Gastrocnemius medialis (tissue), 4 donors: ENCODE measurements at regions of chr5 and their contacts with region 1.

Region 1: DNA sequence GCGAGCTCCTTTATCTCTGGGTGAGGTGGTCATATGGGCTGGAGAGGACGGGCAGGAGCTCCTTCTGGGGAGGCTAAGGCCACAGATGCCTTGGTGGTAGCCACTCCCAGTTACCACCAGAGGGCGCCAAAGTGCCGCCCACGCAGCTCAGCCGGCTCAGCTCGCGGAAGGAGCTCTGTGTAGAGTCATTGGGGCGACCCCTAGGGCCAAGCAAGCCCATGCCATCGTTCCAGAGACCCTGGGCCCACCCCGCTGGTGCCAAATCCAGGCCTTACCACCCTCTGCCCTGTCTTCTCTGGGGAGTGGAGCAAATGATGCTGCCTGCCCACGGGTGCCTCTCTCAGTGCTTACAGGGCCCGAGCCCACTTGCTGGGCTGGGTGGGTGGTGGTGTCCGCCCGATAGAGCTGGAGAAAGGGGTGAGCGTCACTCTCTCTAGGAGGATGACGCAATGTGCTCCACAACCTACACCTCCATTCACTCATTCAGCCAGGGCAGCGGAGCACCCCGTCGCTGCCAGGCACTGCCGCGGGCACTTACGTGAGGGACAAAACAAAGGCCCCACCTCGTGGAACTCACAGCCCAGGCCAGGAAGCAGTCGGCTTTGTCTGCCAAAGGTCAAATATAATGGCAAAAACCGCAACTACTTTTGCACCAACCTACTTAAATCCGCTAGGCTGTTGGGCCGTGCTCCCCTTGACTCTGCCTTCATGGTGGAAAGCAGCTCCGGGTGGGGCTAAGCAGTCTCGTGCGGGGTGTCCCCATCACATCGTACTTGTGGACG is 13.8 kb downstream of the TSPAN17 start:
- DNase-seq: peak in 1 of 2 donors; percentile 40
- ATAC-seq: peak; percentile 59 to 82
- H3K4me3 ChIP-seq: no peak overlapping the region
- H3K27ac ChIP-seq: no peak overlapping the region
- H3K4me1 ChIP-seq: peaks cover 0 to 4% of the 10 kb centered on the region in 2 donors
- H3K27me3 ChIP-seq: peaks cover 15 to 21% (median 18%) of the 10 kb centered on the region in 3 donors
- CTCF ChIP-seq: peak; percentile 79 to 98 (median 91)
- POLR2A ChIP-seq: no peak

Region 2: GRCh38 chr5:176573564-176574296 is 87.3 kb before region 1 on chr5:
- in situ Hi-C with region 1: no loop called
- intact Hi-C with region 1: loop called (anchors 5 kb)
- DNase-seq: peak; percentile 36 to 43
- ATAC-seq: peak; percentile 84 to 93
- H3K4me3 ChIP-seq: no peak overlapping the region
- H3K27ac ChIP-seq: no peak overlapping the region
- H3K4me1 ChIP-seq: no peaks in the 10 kb centered on the region
- H3K27me3 ChIP-seq: peaks cover 2 to 3% (median 2%) of the 10 kb centered on the region in 3 donors
- CTCF ChIP-seq: peak; percentile 67 to 88 (median 84)
- POLR2A ChIP-seq: no peak

Region 3: GRCh38 chr5:176959051-176959450 is 298.0 kb after region 1 on chr5:
- in situ Hi-C with region 1: loop called in 2 of 4 experiments (anchors 25 kb)
- intact Hi-C with region 1: loop called (anchors 5 kb)
- DNase-seq: no peak
- ATAC-seq: no peak
- H3K4me3 ChIP-seq: no peak overlapping the region
- H3K27ac ChIP-seq: no peak overlapping the region
- H3K4me1 ChIP-seq: peaks cover 0 to 2% of the 10 kb centered on the region in 2 donors
- H3K27me3 ChIP-seq: no peaks in the 10 kb centered on the region
- CTCF ChIP-seq: peak in 3 of 5 experiments; percentile 27 to 35 (median 29)
- POLR2A ChIP-seq: no peak